ENCODE measurements at regions of chr13 and their contacts with region 1.

Region 1: GRCh38 chr13:75549262-75550158 is at the start of gene UCHL3:
- DNase-seq: peak; percentile 98
- H3K4me3 Mint-ChIP-seq: peak within 1 kb of the TSS; percentile 87
- H3K27ac Mint-ChIP-seq: peak within 1 kb of the TSS; percentile 94
- H3K4me1 Mint-ChIP-seq: peaks cover 40% of the 10 kb centered on the region
- H3K27me3 Mint-ChIP-seq: no peaks in the 10 kb centered on the region
- total RNA-seq, gene UCHL3: 37.3 to 37.6 TPM

Region 2: GRCh38 chr13:73765651-73766384 is 1783.7 kb before region 1 on chr13:
- CTCF ChIA-PET with region 1: no interaction called
- intact Hi-C with region 1: loop called (anchors 5 kb)
- DNase-seq: peak; percentile 95
- H3K4me3 Mint-ChIP-seq: peak overlapping the region; percentile 70
- H3K27ac Mint-ChIP-seq: peak overlapping the region; percentile 92
- H3K4me1 Mint-ChIP-seq: peaks cover 64% of the 10 kb centered on the region
- H3K27me3 Mint-ChIP-seq: no peaks in the 10 kb centered on the region

Region 3: DNA sequence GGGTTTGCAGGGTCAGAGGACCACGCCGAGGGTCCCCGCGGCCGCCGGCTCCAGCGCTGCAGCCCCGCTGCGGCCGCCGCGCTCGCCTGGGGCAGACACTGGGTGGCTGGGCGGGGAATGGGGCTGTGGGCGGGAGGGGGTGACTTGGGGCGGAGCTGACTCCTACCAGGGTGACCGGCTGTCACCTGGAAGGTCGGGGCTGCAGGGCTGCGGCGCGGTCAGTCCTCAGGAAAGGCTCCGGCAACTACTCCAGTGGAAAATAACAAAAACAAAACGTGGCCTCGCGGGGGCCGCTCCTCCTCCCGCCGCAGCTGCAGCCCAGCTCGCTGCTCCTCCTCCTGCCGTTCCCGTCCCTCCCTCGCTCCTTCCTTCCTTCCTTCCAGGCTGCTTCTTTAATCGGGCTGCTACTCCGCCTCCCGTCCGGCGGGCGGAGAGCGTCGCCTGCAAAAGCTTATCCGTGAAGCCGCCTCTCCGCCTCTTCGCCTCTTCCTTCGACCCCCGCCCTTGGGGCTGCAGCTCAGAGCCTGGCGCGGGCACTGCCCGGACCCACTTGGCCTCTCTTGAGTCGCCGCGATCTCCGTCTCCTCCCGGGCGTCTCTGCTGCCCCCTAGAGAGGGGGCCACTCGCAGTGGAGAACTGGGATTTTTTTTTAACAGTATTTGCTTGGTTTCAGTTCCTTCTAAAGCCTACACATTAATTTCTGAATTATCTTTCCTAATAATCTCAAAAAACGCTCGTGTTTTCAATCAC is 67.3 kb before region 1 on chr13 and contains the start of gene TBC1D4:
- CTCF ChIA-PET with region 1: interaction called, 3 read pairs
- intact Hi-C with region 1: loop called (anchors 1 kb)
- DNase-seq: peak; percentile 68
- H3K4me3 Mint-ChIP-seq: peak within 1 kb of the TSS; percentile 94
- H3K27ac Mint-ChIP-seq: no peak within 1 kb of the TSS
- H3K4me1 Mint-ChIP-seq: peaks cover 11% of the 10 kb centered on the region
- H3K27me3 Mint-ChIP-seq: peaks cover 53% of the 10 kb centered on the region
- total RNA-seq, gene TBC1D4: 13.4 to 19.7 TPM

Region 4: GRCh38 chr13:75530536-75530935 is 19.0 kb before region 1 on chr13:
- CTCF ChIA-PET with region 1: no interaction called
- intact Hi-C with region 1: no loop called
- DNase-seq: no peak
- H3K4me3 Mint-ChIP-seq: no peak overlapping the region
- H3K27ac Mint-ChIP-seq: peak overlapping the region; percentile 46
- H3K4me1 Mint-ChIP-seq: peaks cover 48% of the 10 kb centered on the region
- H3K27me3 Mint-ChIP-seq: no peaks in the 10 kb centered on the region

Region 5: GRCh38 chr13:75569576-75569975 is 20.1 kb after region 1 on chr13:
- CTCF ChIA-PET with region 1: no interaction called
- intact Hi-C with region 1: no loop called
- DNase-seq: no peak
- H3K4me3 Mint-ChIP-seq: no peak overlapping the region
- H3K27ac Mint-ChIP-seq: no peak overlapping the region
- H3K4me1 Mint-ChIP-seq: no peaks in the 10 kb centered on the region
- H3K27me3 Mint-ChIP-seq: no peaks in the 10 kb centered on the region

Region 6: GRCh38 chr13:75635828-75636435 is 86.4 kb after region 1 on chr13 and contains the start of gene LMO7:
- CTCF ChIA-PET with region 1: no interaction called
- intact Hi-C with region 1: loop called (anchors 1 kb)
- DNase-seq: peak; percentile 55
- H3K4me3 Mint-ChIP-seq: peak within 1 kb of the TSS; percentile 75
- H3K27ac Mint-ChIP-seq: no peak within 1 kb of the TSS
- H3K4me1 Mint-ChIP-seq: peaks cover 6% of the 10 kb centered on the region
- H3K27me3 Mint-ChIP-seq: peaks cover 12% of the 10 kb centered on the region
- total RNA-seq, gene LMO7: 10.5 to 12.0 TPM

Region 7: GRCh38 chr13:76991796-76992547 is 1442.5 kb after region 1 on chr13 and contains the start of gene CLN5:
- CTCF ChIA-PET with region 1: no interaction called
- intact Hi-C with region 1: loop called (anchors 10 kb)
- DNase-seq: peak; percentile 95
- H3K4me3 Mint-ChIP-seq: peak within 1 kb of the TSS; percentile 95
- H3K27ac Mint-ChIP-seq: peak within 1 kb of the TSS; percentile 97
- H3K4me1 Mint-ChIP-seq: peaks cover 39% of the 10 kb centered on the region
- H3K27me3 Mint-ChIP-seq: no peaks in the 10 kb centered on the region
- total RNA-seq, gene CLN5: 13.6 to 14.6 TPM

Measured in activated naive CD4-positive, alpha-beta T cell treated with anti-CD3 and anti-CD28 coated beads for 36 hours (primary cell).